Activated T-helper 2 cell treated with anti-CD3 and anti-CD28 coated beads, Interferon-gamma antibody, Interleukin-2, Interleukin-4, amounts not matched to agents 10 μg/mL and 5 μg/mL and 100 μg/mL, durations not matched to agents 14 hours and 24 hours and 36 hours (primary cell): ENCODE measurements at regions of chr6 and their contacts with region 1.

Region 1: DNA sequence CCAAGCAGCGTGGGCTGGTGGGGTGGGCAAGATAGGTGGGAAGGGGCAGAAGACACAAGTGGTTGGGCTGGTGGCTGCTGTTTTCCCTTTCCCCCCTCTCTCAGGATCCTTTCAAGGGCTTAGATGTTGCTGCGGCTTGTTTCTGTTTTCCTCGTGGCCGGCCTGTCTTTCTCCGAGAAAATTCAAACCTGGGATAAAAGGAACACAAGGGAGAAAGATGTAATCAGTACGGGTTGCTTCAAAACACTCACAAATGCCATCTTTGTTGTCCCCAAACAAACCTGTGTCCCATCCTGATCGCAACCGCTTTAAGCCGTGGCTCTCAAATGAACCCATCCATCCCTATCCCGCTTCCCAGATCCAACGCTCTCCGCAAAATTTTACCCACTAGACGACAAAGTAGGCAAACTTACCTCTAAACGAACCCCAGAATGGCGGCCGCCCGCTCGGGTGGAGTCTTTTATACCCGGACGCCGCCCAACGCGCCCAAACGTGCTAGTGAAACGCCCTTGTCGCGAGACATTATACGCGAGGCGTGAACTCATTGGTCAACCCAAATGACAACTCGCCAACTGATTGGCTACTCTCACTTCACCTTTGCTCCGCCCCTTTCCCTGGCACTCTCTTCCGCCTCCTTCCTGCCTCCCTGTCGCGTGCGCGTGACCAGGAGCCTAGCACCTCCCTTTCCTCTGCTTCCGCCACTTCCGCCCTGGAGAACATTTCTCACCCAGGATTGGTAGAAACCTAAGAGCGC is at the start of gene PPP1R10:
- DNase-seq: peak; percentile 99
- H3K4me3 Mint-ChIP-seq: peak within 1 kb of the TSS; percentile 96
- H3K27ac Mint-ChIP-seq: peak within 1 kb of the TSS; percentile 98
- H3K4me1 Mint-ChIP-seq: peaks cover 29% of the 10 kb centered on the region
- H3K27me3 Mint-ChIP-seq: peaks cover 3% of the 10 kb centered on the region
- total RNA-seq, gene PPP1R10: 96.7 and 102 TPM in 2 replicates

Region 2: DNA sequence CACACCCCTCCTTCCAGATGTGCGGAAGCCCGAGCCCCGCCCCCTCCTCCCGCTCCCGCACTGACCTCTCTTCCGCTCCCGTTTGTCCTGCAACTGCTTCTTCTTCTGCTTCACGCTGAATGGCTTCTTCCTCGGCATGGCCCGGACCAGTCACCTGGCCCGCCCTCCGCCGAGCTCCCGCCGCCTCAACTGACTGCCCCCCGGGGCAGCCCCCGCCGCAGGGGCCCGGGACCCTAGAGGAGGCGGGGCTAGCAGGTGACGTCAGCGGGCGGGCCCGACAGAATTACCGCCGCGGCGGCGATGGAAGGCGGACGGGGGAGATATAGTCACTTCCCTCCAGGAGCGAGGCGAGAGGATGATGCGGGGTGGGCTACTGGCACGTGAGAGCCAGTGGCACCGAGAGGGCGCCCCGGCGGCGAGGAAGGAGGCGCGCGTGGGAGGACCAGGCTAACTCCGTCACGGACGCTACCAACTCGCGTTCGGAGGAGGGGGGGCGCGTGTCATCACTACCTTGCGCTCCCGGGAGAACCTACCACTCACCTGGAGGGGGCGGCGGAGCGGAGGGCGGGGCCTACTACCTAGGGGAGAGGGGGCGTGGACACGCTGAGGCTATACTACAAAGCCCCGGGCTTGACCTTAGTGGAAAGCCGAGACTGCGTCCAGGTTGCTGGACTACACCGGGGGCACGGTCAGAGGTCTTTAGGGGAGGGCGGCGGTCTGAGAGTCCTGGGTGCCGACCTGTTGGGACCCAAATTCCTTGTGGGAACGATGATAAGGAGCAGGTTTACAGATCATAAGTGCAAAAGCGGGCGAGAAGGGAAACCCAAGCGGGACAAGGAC is 60.7 kb before region 1 on chr6 and contains the start of gene GNL1:
- intact Hi-C with region 1: loop called (anchors 1 kb)
- DNase-seq: peak; percentile 96
- H3K4me3 Mint-ChIP-seq: peak within 1 kb of the TSS; percentile 98
- H3K27ac Mint-ChIP-seq: peak within 1 kb of the TSS; percentile 100
- H3K4me1 Mint-ChIP-seq: peaks cover 22% of the 10 kb centered on the region
- H3K27me3 Mint-ChIP-seq: no peaks in the 10 kb centered on the region
- total RNA-seq, gene GNL1: 79.8 and 88.2 TPM in 2 replicates

Region 3: GRCh38 chr6:30635834-30636233 is 18.8 kb after region 1 on chr6:
- intact Hi-C with region 1: no loop called
- DNase-seq: no peak
- H3K4me3 Mint-ChIP-seq: no peak overlapping the region
- H3K27ac Mint-ChIP-seq: no peak overlapping the region
- H3K4me1 Mint-ChIP-seq: peaks cover 6% of the 10 kb centered on the region
- H3K27me3 Mint-ChIP-seq: no peaks in the 10 kb centered on the region

Region 4: DNA sequence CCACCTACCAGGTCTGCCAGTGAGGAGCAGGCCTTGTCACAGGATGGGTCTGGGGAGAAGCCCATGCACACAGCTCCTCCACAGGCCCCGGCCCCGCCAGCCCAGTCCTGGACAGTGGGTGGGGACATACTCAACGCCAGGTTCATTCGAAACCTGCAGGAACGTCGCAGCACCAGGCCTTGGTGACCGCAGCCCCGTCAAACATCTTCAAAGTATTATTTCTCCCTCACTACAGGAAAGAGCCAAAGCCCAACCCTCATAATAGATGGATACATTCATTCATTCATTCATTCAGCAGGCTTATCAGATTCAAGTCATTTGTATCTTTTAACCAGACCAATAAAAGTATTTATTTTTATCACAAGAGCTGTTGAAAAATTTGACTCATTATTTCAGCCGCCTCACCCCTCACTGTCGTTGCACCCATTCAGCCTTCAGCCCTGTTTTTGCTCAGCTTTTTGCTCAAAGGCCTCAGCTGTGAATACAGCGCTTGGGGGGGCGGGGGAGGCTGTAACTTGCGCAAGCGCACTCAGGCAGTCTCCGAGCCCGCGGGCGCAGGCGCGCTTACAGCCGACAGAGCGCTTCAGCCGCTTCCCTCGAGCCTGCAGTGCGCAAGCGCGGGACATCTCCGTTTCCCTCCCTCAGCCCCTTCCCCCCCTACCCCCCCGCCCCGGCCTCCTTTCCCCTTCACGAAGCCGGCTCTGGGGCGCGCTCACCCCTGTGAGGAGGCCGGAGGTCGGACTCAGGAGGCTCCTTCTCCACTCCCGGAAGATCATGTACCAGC is 29.7 kb after region 1 on chr6 and contains the start of gene C6orf136:
- intact Hi-C with region 1: loop called (anchors 1 kb)
- DNase-seq: peak; percentile 89
- H3K4me3 Mint-ChIP-seq: peak within 1 kb of the TSS; percentile 88
- H3K27ac Mint-ChIP-seq: peak within 1 kb of the TSS; percentile 89
- H3K4me1 Mint-ChIP-seq: peaks cover 18% of the 10 kb centered on the region
- H3K27me3 Mint-ChIP-seq: no peaks in the 10 kb centered on the region
- total RNA-seq, gene C6orf136: 23.1 and 28.2 TPM in 2 replicates

Region 5: DNA sequence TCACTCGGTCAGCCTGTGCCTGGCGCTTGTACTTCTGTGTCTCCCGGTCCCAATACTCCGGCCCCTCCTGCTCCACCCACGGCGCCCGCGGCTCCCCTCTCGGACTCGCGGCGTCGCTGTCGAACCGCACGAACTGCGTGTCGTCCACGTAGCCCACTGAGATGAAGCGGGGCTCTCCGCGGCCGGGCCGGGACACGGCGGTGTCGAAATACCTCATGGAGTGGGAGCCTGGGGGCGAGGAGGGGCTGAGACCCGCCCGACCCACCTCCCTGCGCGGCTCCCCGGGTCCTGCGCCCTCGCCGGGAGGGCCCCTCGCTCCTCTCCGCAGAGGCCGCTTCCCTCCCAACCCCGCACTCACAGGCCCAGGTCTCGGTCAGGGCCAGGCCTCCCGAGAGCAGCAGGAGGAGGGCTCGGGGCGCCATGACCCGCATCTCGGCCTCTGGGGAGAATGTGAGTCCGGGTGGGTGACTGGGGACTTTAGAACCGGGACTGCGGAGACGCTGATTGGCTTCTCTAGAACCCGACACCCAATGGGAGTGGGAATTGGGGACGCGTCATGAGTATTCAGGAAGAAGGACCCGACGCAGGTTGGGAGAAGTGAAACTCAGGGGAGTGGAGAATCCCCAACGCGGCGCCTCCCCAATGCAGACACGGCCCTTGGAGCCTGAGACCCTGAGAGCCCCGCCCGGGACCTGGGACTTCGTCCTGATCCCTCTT is 654.8 kb after region 1 on chr6 and contains the start of gene HLA-C:
- intact Hi-C with region 1: loop called (anchors 5 kb)
- DNase-seq: peak; percentile 88
- H3K4me3 Mint-ChIP-seq: peak within 1 kb of the TSS; percentile 94
- H3K27ac Mint-ChIP-seq: peak within 1 kb of the TSS; percentile 98
- H3K4me1 Mint-ChIP-seq: peaks cover 34% of the 10 kb centered on the region
- H3K27me3 Mint-ChIP-seq: peaks cover 10% of the 10 kb centered on the region
- total RNA-seq, gene HLA-C: 895 and 906 TPM in 2 replicates